GM12878 (cell line): ENCODE measurements at regions of chr11 and their contacts with region 1.

Region 1: DNA sequence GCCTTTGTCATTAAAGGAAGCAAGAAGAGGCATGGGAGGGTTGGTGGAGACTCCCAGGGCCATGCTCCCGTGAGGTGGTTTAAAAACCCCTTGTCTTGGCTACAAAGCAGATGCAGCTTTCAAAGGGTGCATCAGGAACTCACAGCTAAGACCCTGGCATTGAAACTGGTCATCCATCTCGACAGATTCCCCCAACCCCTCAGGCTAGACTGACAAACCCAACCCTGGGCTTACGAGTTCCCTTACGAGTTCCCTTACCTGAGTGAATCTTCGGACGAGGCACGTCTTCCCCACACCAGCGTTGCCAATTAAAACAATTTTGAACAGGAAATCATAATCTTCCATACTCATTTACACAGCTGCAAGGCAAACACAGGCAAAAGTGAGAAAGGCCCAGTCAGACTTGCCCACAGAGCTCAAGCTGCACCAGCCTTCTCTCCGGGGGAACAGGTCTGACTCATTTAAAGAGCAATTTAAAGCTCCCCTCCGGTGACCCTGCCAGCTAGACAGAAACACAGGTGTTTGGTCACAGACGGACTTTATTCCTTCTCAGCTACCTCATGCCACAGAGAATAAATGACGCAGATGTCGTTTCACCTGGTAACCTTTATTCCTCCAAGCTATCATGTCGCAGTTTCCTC is 74.6 kb downstream of the RAB30 start:
- DNase-seq: peak; percentile 87
- ATAC-seq: peak; percentile 90
- H3K4me3 ChIP-seq: peak overlapping the region; percentile 15; the same call in 1 of the 2 replicates
- H3K27ac ChIP-seq: peak overlapping the region; percentile 67
- H3K4me1 ChIP-seq: peaks cover 46% of the 10 kb centered on the region
- H3K27me3 ChIP-seq: no peaks in the 10 kb centered on the region
- CTCF ChIP-seq: no peak
- EP300 ChIP-seq: peak; percentile 89 to 94; a peak in 3 of 4 replicates
- POLR2A ChIP-seq: no peak
- RAD21 ChIP-seq: 0 out of 2 replicates have a peak, but pooled peaks have one; percentile 0

Region 2: GRCh38 chr11:82927254-82927880 is 69.7 kb before region 1 on chr11:
- CTCF ChIA-PET with region 1: interaction called, 13 read pairs
- POLR2A ChIA-PET with region 1: interaction called, 5 read pairs
- RAD21 ChIA-PET with region 1: interaction called, 31 read pairs
- SMC1A ChIA-PET with region 1: interaction called, 28 read pairs
- in situ Hi-C with region 1: no loop called
- intact Hi-C with region 1: no loop called
- DNase-seq: no peak
- ATAC-seq: peak; percentile 93
- H3K4me3 ChIP-seq: no peak overlapping the region
- H3K27ac ChIP-seq: no peak overlapping the region; the same call in 1 of the 2 replicates
- H3K4me1 ChIP-seq: peaks cover 20% of the 10 kb centered on the region
- H3K27me3 ChIP-seq: no peaks in the 10 kb centered on the region
- CTCF ChIP-seq: peak; percentile 73 to 77 (median 76)
- EP300 ChIP-seq: no peak
- POLR2A ChIP-seq: no peak
- RAD21 ChIP-seq: peak; percentile 63

Region 3: DNA sequence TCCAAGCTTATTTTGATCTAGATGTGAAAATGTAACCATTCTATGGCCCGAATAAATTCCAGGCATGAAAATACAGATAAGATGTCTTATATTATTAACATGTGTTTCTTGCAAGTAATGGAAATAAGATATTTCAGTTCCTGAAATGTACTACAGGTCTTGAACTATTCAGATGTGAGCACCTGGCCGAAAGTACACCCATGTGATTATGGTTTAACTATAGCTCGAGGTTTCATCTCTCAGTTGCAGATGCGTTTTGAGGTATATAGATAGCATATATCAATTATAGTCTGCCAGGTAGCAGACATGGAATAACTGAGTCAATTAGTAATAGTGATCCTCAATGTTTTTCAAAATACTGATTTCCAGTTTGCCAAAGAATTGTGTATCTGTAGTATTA is 27.3 kb before region 1 on chr11:
- CTCF ChIA-PET with region 1: interaction called, 8 read pairs
- POLR2A ChIA-PET with region 1: interaction called, 13 read pairs
- RAD21 ChIA-PET with region 1: interaction called, 16 read pairs
- SMC1A ChIA-PET with region 1: interaction called, 42 read pairs
- in situ Hi-C with region 1: no loop called
- intact Hi-C with region 1: no loop called
- DNase-seq: peak; percentile 84
- ATAC-seq: peak; percentile 83
- H3K4me3 ChIP-seq: no peak overlapping the region
- H3K27ac ChIP-seq: peak overlapping the region; percentile 94
- H3K4me1 ChIP-seq: peaks cover 41% of the 10 kb centered on the region
- H3K27me3 ChIP-seq: no peaks in the 10 kb centered on the region
- CTCF ChIP-seq: no peak
- EP300 ChIP-seq: peak; percentile 99 to 100
- POLR2A ChIP-seq: no peak
- RAD21 ChIP-seq: no peak

Region 4: GRCh38 chr11:83007909-83008580 is 11.0 kb after region 1 on chr11:
- CTCF ChIA-PET with region 1: interaction called, 35 read pairs
- POLR2A ChIA-PET with region 1: interaction called, 58 read pairs
- RAD21 ChIA-PET with region 1: interaction called, 60 read pairs
- SMC1A ChIA-PET with region 1: interaction called, 103 read pairs
- in situ Hi-C with region 1: no loop called
- intact Hi-C with region 1: no loop called
- DNase-seq: no peak
- ATAC-seq: peak; percentile 73
- H3K4me3 ChIP-seq: peak overlapping the region; percentile 24; the same call in 1 of the 2 replicates
- H3K27ac ChIP-seq: peak overlapping the region; percentile 67
- H3K4me1 ChIP-seq: peaks cover 26% of the 10 kb centered on the region
- H3K27me3 ChIP-seq: no peaks in the 10 kb centered on the region
- CTCF ChIP-seq: peak in 1 of 3 experiments; percentile 10; a peak in 1 of 6 replicates
- EP300 ChIP-seq: no peak
- POLR2A ChIP-seq: no peak
- RAD21 ChIP-seq: no peak

Region 5: GRCh38 chr11:83051760-83052671 is 54.9 kb after region 1 on chr11:
- CTCF ChIA-PET with region 1: interaction called, 5 read pairs
- POLR2A ChIA-PET with region 1: no interaction called
- RAD21 ChIA-PET with region 1: interaction called, 9 read pairs
- SMC1A ChIA-PET with region 1: interaction called, 18 read pairs
- in situ Hi-C with region 1: no loop called
- intact Hi-C with region 1: no loop called
- DNase-seq: no peak
- ATAC-seq: no peak
- H3K4me3 ChIP-seq: no peak overlapping the region
- H3K27ac ChIP-seq: no peak overlapping the region
- H3K4me1 ChIP-seq: peaks cover 40% of the 10 kb centered on the region
- H3K27me3 ChIP-seq: no peaks in the 10 kb centered on the region
- CTCF ChIP-seq: no peak
- EP300 ChIP-seq: no peak
- POLR2A ChIP-seq: no peak
- RAD21 ChIP-seq: no peak

Region 6: DNA sequence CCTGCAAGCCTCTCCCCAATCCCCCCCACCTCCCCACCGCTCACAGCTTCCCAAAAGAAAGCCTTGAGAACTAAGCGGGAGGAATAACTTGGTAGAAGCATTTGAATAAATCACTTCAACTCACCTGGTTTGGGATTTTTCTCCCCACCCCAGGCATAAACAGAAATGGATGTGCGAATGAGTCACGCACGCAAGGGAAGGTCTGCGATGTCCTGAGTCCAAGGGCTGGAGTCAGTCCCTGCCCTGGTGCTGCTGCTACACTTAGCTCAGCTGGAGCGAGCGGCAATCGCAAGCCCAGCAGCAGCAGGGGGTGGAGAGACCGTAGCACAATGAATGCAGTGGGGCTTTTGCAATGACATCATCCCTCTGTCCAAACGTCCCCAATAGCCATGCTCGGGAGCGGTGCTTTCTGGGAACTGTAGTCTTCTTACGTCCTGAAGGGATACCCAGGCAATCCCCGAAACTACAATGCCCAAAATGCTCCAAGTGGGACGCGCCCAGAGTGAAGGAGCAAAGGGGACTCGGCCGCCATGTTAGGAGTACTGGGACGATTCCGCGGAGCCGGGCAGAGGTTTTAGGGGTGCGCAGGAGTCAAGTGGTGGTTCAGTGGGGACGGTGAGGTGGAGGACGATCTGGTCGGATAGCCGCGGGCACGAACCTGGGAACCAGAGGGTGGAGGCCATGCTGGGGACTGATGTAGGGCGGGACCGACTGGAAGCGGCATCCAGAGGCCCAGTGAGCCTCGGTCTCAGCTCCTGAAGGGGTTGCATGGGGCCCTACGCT is 74.7 kb after region 1 on chr11 and contains the start of gene RAB30:
- CTCF ChIA-PET with region 1: interaction called, 5 read pairs
- POLR2A ChIA-PET with region 1: interaction called, 142 read pairs
- RAD21 ChIA-PET with region 1: interaction called, 96 read pairs
- SMC1A ChIA-PET with region 1: interaction called, 138 read pairs
- in situ Hi-C with region 1: no loop called
- intact Hi-C with region 1: loop called (anchors 1 kb)
- DNase-seq: peak; percentile 99
- ATAC-seq: peak; percentile 88
- H3K4me3 ChIP-seq: peak within 1 kb of the TSS; percentile 97
- H3K27ac ChIP-seq: peak within 1 kb of the TSS; percentile 92
- H3K4me1 ChIP-seq: peaks cover 16% of the 10 kb centered on the region
- H3K27me3 ChIP-seq: no peaks in the 10 kb centered on the region
- CTCF ChIP-seq: no peak
- EP300 ChIP-seq: no peak
- POLR2A ChIP-seq: peak; percentile 93
- RAD21 ChIP-seq: peak; percentile 33; the same call in 1 of the 2 replicates
- polyA plus RNA-seq, gene RAB30: 9.8 to 14.2 TPM

Region 7: DNA sequence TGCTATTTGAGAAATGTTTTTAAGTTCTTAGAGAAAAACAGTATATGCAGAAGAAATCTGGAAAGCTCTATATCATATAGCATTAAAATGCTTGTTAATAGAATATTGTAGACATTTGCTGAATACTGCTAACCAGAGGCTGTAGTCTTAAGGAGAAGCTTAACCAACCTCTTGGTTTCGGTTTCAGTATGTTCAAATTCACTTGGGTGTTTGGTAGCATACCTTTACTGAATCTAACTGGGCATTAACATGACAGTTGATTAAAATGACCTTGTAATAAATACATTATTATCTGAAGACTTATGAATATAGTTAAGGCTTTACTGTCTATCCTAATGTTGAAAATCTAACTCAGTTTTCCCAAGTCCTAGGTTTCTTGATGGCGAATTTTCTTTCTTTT is 165.3 kb after region 1 on chr11:
- CTCF ChIA-PET with region 1: interaction called, 3 read pairs
- POLR2A ChIA-PET with region 1: interaction called, 5 read pairs
- RAD21 ChIA-PET with region 1: interaction called, 14 read pairs
- SMC1A ChIA-PET with region 1: interaction called, 11 read pairs
- in situ Hi-C with region 1: no loop called
- intact Hi-C with region 1: loop called (anchors 2 kb)
- DNase-seq: no peak
- ATAC-seq: peak; percentile 67
- H3K4me3 ChIP-seq: peak overlapping the region; percentile 98
- H3K27ac ChIP-seq: no peak overlapping the region
- H3K4me1 ChIP-seq: no peaks in the 10 kb centered on the region; the same call in none of the 2 replicates
- H3K27me3 ChIP-seq: no peaks in the 10 kb centered on the region
- CTCF ChIP-seq: no peak
- EP300 ChIP-seq: no peak
- POLR2A ChIP-seq: no peak
- RAD21 ChIP-seq: no peak

Region 8: DNA sequence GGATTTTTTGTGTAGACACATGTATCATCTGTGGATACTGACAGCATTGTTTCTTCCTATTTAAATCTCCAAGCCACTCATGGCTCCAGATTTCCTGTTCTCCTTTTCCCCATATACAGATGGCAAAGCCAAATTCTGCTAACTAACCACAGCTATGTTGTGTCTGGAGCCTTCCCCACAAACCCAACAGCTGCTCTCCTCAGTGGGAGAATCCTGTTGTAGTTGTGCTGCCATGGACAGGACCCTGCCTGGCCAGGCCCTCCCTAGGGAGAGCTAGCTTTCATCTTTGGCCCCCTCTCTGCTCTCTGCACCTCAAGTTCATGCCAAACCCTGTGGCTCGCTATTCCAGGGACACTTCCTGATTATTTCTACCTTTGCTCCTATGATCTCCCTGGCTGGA is 395.5 kb after region 1 on chr11:
- CTCF ChIA-PET with region 1: no interaction called
- POLR2A ChIA-PET with region 1: no interaction called
- RAD21 ChIA-PET with region 1: no interaction called
- SMC1A ChIA-PET with region 1: no interaction called
- in situ Hi-C with region 1: no loop called
- intact Hi-C with region 1: no loop called
- DNase-seq: no peak
- ATAC-seq: no peak
- H3K4me3 ChIP-seq: no peak overlapping the region
- H3K27ac ChIP-seq: no peak overlapping the region
- H3K4me1 ChIP-seq: no peaks in the 10 kb centered on the region
- H3K27me3 ChIP-seq: no peaks in the 10 kb centered on the region
- CTCF ChIP-seq: no peak
- EP300 ChIP-seq: no peak
- POLR2A ChIP-seq: no peak
- RAD21 ChIP-seq: no peak